ENCODE measurements at regions of chr1 and their contacts with region 1.

Region 1: GRCh38 chr1:115138968-115139367 is 49.7 kb upstream of the TSPAN2 start:
- DNase-seq: peak; percentile 87
- H3K4me3 ChIP-seq: no peak overlapping the region; a peak in 1 of 4 replicates
- H3K27ac ChIP-seq: peak overlapping the region; percentile 16 to 60; a peak in 3 of 4 replicates
- H3K4me1 ChIP-seq: peaks cover 5 to 20% of the 10 kb centered on the region in 2 experiments; a peak in 2 of 4 replicates
- H3K27me3 ChIP-seq: no peaks in the 10 kb centered on the region
- CTCF ChIP-seq: peak; percentile 93
- EP300 ChIP-seq: no peak
- RAD21 ChIP-seq: peak; percentile 99

Region 2: GRCh38 chr1:114794038-114794437 is 344.9 kb before region 1 on chr1:
- CTCF ChIA-PET with region 1: no interaction called
- POLR2A ChIA-PET with region 1: no interaction called
- DNase-seq: no peak
- H3K4me3 ChIP-seq: no peak overlapping the region
- H3K27ac ChIP-seq: no peak overlapping the region
- H3K4me1 ChIP-seq: no peaks in the 10 kb centered on the region
- H3K27me3 ChIP-seq: peaks cover 13% of the 10 kb centered on the region
- CTCF ChIP-seq: no peak
- EP300 ChIP-seq: no peak
- RAD21 ChIP-seq: no peak

Region 3: DNA sequence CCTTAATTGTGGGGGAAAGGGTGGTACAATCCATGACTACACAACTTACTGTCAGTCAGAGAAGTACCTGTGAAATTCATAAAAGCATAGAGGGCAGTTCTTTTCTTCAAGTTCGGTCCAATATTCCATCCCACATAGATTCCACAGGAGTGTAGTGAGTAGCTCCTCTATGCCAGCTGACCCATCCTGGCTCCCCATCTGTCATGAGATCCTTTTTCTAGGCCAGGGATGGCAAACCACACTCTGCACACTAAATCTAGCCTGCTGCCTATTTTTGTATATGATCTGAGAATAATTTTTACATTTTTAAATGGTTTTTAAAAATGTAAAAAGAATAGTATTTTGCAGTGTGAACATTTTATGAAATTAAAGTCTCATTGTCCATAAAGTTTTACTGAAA is 57.3 kb after region 1 on chr1:
- CTCF ChIA-PET with region 1: no interaction called
- POLR2A ChIA-PET with region 1: no interaction called
- DNase-seq: no peak
- H3K4me3 ChIP-seq: no peak overlapping the region
- H3K27ac ChIP-seq: no peak overlapping the region
- H3K4me1 ChIP-seq: peaks cover 18 to 29% of the 10 kb centered on the region in 2 experiments
- H3K27me3 ChIP-seq: no peaks in the 10 kb centered on the region
- CTCF ChIP-seq: no peak
- EP300 ChIP-seq: no peak
- RAD21 ChIP-seq: no peak

Region 4: DNA sequence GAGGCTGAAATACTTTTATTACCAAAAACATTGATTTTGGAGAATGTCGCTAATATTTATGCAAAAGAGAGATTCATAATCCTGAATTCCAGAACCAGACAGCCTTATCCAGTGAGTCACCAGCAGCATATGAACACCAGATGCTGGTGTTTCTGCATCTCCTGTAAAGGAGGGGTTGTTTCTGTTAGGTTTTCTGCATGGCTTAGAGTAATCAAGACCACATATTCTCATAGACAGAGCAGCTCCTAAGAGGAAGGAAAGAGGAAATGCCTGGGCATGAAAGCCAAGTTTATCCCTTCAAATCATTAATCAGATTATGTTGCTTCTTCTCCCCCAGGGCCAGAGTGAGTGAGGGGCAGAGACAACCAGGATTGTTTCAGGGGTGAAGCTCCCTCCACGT is 112.9 kb after region 1 on chr1:
- CTCF ChIA-PET with region 1: interaction called, 10 read pairs
- POLR2A ChIA-PET with region 1: no interaction called
- DNase-seq: peak; percentile 59
- H3K4me3 ChIP-seq: no peak overlapping the region
- H3K27ac ChIP-seq: peak overlapping the region; percentile 98 to 99
- H3K4me1 ChIP-seq: peaks cover 5 to 14% of the 10 kb centered on the region in 2 experiments; a peak in 3 of 4 replicates
- H3K27me3 ChIP-seq: no peaks in the 10 kb centered on the region
- CTCF ChIP-seq: no peak
- EP300 ChIP-seq: peak; percentile 79 to 92
- RAD21 ChIP-seq: peak; percentile 25; the same call in 1 of the 2 replicates

Region 5: DNA sequence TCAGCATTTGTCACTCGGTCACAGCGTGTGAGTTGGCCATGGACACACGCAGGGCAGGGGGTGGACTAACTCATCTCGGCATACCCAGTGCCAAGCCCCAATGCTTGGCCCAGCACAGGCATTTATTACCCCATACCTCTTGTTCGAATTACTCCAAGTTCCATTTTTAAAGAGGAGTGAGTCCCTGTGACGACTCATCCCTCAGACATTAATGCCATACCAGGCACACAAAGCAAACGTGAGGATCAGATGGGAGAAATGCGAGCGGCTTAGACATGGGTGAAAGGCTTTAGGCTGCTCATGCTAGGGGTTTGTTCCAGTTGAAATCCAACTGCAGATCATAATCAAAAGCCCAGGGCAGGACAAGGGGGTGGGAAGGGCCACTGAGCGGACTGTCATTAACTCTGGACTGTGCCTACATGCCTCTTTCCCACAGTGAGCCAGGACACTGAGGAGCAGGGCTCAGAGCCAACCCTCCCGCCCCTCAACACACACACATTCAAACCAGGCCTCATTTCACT is 317.5 kb after region 1 on chr1:
- CTCF ChIA-PET with region 1: interaction called, 12 read pairs
- POLR2A ChIA-PET with region 1: no interaction called
- DNase-seq: no peak
- H3K4me3 ChIP-seq: no peak overlapping the region
- H3K27ac ChIP-seq: peak overlapping the region; percentile 5 to 64; a peak in 1 of 4 replicates
- H3K4me1 ChIP-seq: peaks cover 3 to 21% of the 10 kb centered on the region in 2 experiments; a peak in 3 of 4 replicates
- H3K27me3 ChIP-seq: no peaks in the 10 kb centered on the region
- CTCF ChIP-seq: no peak
- EP300 ChIP-seq: no peak
- RAD21 ChIP-seq: no peak

Region 6: GRCh38 chr1:115476616-115477015 is 337.6 kb after region 1 on chr1:
- CTCF ChIA-PET with region 1: interaction called, 280 read pairs
- POLR2A ChIA-PET with region 1: no interaction called
- DNase-seq: no peak
- H3K4me3 ChIP-seq: no peak overlapping the region
- H3K27ac ChIP-seq: no peak overlapping the region
- H3K4me1 ChIP-seq: peaks cover 0 to 7% of the 10 kb centered on the region in 2 experiments; a peak in 1 of 4 replicates
- H3K27me3 ChIP-seq: no peaks in the 10 kb centered on the region
- CTCF ChIP-seq: peak; percentile 22
- EP300 ChIP-seq: no peak
- RAD21 ChIP-seq: peak; percentile 43

Region 7: GRCh38 chr1:115557715-115558114 is 418.7 kb after region 1 on chr1:
- CTCF ChIA-PET with region 1: interaction called, 10 read pairs
- POLR2A ChIA-PET with region 1: no interaction called
- DNase-seq: no peak
- H3K4me3 ChIP-seq: no peak overlapping the region
- H3K27ac ChIP-seq: no peak overlapping the region
- H3K4me1 ChIP-seq: peaks cover 0 to 2% of the 10 kb centered on the region in 2 experiments; a peak in 1 of 4 replicates
- H3K27me3 ChIP-seq: no peaks in the 10 kb centered on the region
- CTCF ChIP-seq: no peak
- EP300 ChIP-seq: no peak
- RAD21 ChIP-seq: no peak

Measured in SK-N-SH (cell line).